Stomach (tissue), 19 donors: ENCODE measurements at regions of chr18 and their contacts with region 1.

Region 1: DNA sequence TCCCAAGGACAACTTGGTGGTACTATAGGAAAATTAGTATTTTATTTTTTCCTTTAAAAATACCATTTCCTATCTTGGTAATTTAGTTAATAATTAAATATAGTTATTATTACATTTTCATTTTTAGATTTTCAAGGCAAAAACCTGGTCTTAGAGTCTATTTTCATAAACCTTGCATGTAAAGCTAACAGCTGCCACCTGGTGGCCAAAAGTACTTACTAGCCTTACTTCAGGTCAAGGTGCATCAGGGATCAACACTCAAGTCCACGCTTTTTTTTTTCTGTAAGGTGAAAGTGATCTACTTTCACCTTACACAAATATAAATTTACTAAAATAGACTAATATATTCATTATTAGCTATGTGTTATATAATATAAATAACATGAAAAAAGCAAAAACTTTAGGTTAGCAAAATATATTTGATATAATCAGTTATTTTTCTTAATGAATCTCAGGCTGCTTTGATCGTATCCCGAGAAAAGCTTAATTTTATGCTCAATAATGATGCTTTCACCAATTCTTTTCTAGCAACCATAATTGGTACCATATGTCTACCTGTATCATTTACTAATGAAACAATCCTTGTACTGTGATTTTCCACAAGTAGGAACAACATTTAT is 62.5 kb downstream of the RELCH start:
- DNase-seq: peak; percentile 85 to 92
- H3K4me3 ChIP-seq: no peak overlapping the region
- H3K27ac ChIP-seq: no peak overlapping the region
- H3K4me1 ChIP-seq: peaks cover 0 to 21% (median 0%) of the 10 kb centered on the region in 4 donors
- H3K27me3 ChIP-seq: no peaks in the 10 kb centered on the region
- CTCF ChIP-seq: peak in 5 of 7 experiments; percentile 54 to 85 (median 67)
- EP300 ChIP-seq: no peak
- POLR2A ChIP-seq: no peak

Region 2: DNA sequence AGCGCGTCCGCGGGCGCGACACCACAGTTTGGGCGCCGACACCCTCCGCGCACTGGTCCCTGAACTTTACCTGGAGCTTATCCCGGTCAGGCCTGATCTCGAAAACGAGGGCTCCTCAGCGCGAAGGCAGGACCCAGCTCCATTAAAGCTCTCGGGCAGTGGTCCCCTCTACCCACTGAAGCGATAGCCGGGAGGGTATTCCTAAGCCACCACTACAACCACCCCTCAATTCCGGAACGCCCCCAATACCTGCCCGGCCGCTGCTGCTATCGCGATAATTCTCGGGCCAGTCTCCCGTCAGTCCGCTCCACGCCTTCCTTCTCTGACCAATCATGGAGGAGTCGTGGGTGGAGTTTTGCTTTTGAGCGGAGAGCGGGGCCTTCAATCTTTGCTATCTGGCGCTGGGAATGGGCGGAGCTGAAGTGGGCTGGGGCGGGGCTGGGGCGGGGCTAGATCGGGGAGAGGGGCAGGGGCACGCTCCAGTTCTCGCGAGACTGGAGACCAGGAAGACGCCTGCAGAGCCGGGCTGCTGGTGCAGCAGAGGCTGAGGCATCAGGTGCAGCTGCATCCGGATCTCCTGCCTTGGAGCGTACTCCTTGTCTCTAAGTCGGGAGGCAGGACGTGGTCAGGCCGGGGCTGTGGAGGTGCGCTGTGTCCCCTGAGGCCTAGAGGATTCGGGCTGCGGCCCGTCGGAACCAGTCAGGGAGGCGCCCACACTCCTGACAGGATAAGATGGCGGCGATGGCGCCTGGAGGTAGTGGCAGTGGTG is 62.6 kb before region 1 on chr18 and contains the starts of genes PIGN and RELCH:
- intact Hi-C with region 1: loop called (anchors 10 kb)
- DNase-seq: peak; percentile 95 to 99
- H3K4me3 ChIP-seq: peak within 1 kb of the TSS; percentile 85 to 100 (median 97)
- H3K27ac ChIP-seq: peak within 1 kb of the TSS; percentile 85 to 96 (median 88)
- H3K4me1 ChIP-seq: peaks cover 10 to 73% (median 50%) of the 10 kb centered on the region in 4 donors
- H3K27me3 ChIP-seq: no peaks in the 10 kb centered on the region
- CTCF ChIP-seq: no peak
- EP300 ChIP-seq: no peak
- POLR2A ChIP-seq: peak in 1 of 4 donors; percentile 80
- total RNA-seq, gene PIGN: 2.0 to 113 (median 47.1) TPM
- total RNA-seq, gene RELCH: 32.1 to 85.9 (median 55.9) TPM

Region 3: GRCh38 chr18:62828852-62829251 is 579.3 kb after region 1 on chr18:
- intact Hi-C with region 1: no loop called
- DNase-seq: no peak
- H3K4me3 ChIP-seq: no peak overlapping the region
- H3K27ac ChIP-seq: no peak overlapping the region
- H3K4me1 ChIP-seq: peaks cover 0 to 11% (median 4%) of the 10 kb centered on the region in 4 donors
- H3K27me3 ChIP-seq: no peaks in the 10 kb centered on the region
- CTCF ChIP-seq: no peak
- EP300 ChIP-seq: no peak
- POLR2A ChIP-seq: no peak